Left colon (tissue), 2 donors: ENCODE measurements at regions of chr11 and their contacts with region 1.

Region 1: GRCh38 chr11:9015677-9016076 is 11.9 kb upstream of the NRIP3 start:
- DNase-seq: peak; percentile 47 to 55
- ATAC-seq: peak; percentile 88

Region 2: DNA sequence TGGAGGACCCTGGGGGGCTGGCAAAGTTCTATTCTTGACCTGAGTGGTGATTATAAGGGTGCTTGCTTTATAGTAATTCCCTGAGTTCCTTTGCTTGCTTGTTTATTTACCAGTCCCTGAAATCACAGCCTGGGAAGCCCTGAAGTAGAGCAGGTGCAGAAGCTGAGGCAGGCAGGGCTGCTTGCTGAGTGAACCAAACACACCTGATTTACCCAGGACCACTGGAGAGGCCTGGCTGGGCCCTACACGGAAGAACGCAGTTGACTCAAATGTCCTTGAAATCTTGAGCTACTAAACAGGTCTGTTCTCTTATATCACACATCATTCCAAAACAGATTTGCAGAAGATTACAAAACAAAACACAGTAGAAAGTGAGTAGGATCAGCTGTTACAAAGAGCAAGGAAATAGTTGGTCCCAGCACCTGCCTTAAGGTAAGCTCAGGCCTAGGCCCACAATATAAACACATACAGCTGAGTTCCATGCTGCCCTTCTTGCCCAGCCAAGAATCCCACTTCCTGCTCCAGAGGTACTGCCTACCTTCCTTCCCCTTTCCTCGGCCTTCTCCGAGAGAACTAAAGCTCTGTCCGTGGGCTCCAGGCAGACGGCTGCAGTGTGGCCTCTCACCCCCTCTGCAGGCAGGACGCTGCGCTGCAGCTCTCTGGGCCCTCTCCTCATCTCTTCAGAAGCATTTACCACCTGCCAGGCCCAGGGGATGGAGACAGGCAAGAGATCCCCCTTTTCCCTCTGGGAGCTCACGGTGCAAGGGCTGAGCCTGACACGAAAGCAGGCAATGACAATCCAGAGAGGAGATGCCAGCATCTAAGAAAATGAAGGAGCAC is 121.8 kb after region 1 on chr11:
- intact Hi-C with region 1: loop called (anchors 2 to 10 kb)
- DNase-seq: peak; percentile 61 to 80
- ATAC-seq: peak; percentile 97

Region 3: DNA sequence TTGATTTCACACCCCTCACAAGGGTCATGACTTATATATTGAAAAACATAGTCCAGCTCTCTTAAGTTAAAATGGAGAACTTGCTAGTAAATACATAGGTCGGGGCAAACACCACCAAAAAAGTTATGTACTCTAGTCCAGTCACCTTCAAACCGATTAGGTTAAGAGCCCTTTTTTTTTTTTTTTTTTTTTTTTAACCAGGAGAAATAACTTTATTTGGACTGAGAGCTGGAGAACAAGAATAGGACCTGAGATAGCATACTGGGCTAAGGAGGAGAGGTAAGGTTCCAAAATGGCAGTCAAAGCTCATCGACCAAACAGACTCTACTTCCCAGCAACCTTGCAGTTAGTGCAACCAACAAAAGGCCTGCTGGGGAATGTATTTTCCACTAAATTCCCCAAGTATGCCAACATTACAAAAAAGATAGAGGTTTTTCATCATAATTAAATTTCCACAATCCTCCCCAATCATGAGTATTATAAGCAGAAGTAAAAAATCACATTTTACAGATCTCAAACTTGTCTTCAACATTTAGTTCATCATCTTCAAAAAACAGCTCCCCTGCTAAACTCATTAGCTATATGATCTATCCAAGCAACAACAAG is 294.9 kb after region 1 on chr11:
- intact Hi-C with region 1: no loop called
- DNase-seq: no peak
- ATAC-seq: no peak